Caco-2 (cell line): ENCODE measurements at regions of chr3 and their contacts with region 1.

Region 1: GRCh38 chr3:18946524-18946923 is 201.8 kb upstream of the KCNH8 start:
- DNase-seq: peak; percentile 15 to 39
- H3K4me3 ChIP-seq: no peak overlapping the region
- H3K4me3 Mint-ChIP-seq: no peak overlapping the region
- H3K27ac Mint-ChIP-seq: no peak overlapping the region
- H3K4me1 ChIP-seq: no peaks in the 10 kb centered on the region
- H3K4me1 Mint-ChIP-seq: no peaks in the 10 kb centered on the region
- H3K27me3 ChIP-seq: no peaks in the 10 kb centered on the region
- H3K27me3 Mint-ChIP-seq: peaks cover 3% of the 10 kb centered on the region
- CTCF ChIP-seq: peak in 1 of 2 experiments; percentile 11

Region 2: GRCh38 chr3:18812316-18812715 is 134.2 kb before region 1 on chr3:
- CTCF ChIA-PET with region 1: no interaction called
- POLR2A ChIA-PET with region 1: no interaction called
- intact Hi-C with region 1: no loop called
- DNase-seq: no peak
- H3K4me3 ChIP-seq: no peak overlapping the region
- H3K4me3 Mint-ChIP-seq: no peak overlapping the region
- H3K27ac Mint-ChIP-seq: no peak overlapping the region
- H3K4me1 ChIP-seq: no peaks in the 10 kb centered on the region
- H3K4me1 Mint-ChIP-seq: peaks cover 4% of the 10 kb centered on the region
- H3K27me3 ChIP-seq: no peaks in the 10 kb centered on the region
- H3K27me3 Mint-ChIP-seq: no peaks in the 10 kb centered on the region
- CTCF ChIP-seq: no peak

Region 3: GRCh38 chr3:18968121-18968520 is 21.6 kb after region 1 on chr3:
- CTCF ChIA-PET with region 1: interaction called, 11 read pairs
- POLR2A ChIA-PET with region 1: no interaction called
- intact Hi-C with region 1: no loop called
- DNase-seq: no peak
- H3K4me3 ChIP-seq: no peak overlapping the region
- H3K4me3 Mint-ChIP-seq: no peak overlapping the region
- H3K27ac Mint-ChIP-seq: no peak overlapping the region
- H3K4me1 ChIP-seq: no peaks in the 10 kb centered on the region
- H3K4me1 Mint-ChIP-seq: peaks cover 5% of the 10 kb centered on the region
- H3K27me3 ChIP-seq: no peaks in the 10 kb centered on the region
- H3K27me3 Mint-ChIP-seq: no peaks in the 10 kb centered on the region
- CTCF ChIP-seq: no peak

Region 4: DNA sequence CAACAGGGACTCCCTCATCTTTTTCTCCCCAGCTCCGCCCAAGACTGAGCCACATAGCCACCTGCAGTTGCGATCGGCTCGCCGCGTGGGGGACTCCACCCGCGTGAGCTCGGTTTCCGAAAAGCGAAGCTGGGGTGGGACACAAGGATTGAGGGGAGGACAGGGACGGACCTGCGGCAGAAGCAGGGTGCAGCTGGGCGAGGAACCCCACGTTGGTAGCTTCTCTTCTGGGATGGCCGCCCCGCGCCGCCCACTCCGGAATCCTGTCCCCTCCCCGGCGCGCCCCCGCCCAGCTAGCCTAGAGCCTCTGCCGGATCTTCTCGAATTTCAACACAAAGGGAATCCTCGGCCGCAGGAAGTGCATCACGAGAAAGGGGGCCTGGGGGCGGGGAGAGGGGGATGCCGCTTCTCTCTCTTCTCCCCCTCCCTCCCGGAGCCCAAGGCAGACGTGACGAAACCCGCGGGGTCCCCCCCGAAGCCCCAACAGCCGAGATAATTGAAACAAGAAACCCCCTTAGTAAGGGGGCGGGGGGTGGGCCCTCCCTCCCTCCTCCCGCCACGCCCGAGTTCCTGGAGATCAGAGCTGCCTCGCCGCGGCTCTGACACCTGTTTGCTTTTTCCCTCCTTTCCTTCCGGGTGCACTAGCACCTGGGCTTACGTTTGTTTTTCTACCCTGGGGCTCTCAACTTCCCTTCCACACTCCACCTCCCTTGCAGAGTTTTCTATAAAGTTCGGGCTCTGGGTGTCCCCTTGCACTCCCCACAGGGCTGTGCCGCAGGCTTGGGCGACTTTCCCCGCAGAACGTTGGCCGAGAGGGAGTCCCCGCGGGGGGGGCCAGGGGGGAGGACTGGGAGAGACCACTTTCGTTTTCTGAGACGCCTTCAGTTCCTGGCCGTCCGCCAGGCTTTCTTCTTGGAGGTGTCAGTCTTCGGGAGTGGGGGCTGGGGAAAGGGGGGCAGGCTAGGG is 200.4 kb after region 1 on chr3:
- CTCF ChIA-PET with region 1: no interaction called
- POLR2A ChIA-PET with region 1: no interaction called
- intact Hi-C with region 1: no loop called
- DNase-seq: peak; percentile 69 to 80
- H3K4me3 ChIP-seq: peak overlapping the region; percentile 61
- H3K4me3 Mint-ChIP-seq: peak overlapping the region; percentile 87
- H3K27ac Mint-ChIP-seq: peak overlapping the region; percentile 78
- H3K4me1 ChIP-seq: 0 out of 2 replicates have a peak, but pooled peaks cover 4% of the 10 kb centered on the region
- H3K4me1 Mint-ChIP-seq: no peaks in the 10 kb centered on the region
- H3K27me3 ChIP-seq: no peaks in the 10 kb centered on the region
- H3K27me3 Mint-ChIP-seq: peaks cover 21% of the 10 kb centered on the region
- CTCF ChIP-seq: peak; percentile 25 to 53